K562 (cell line): ENCODE measurements at regions of chr1 and their contacts with region 1.

Region 1: DNA sequence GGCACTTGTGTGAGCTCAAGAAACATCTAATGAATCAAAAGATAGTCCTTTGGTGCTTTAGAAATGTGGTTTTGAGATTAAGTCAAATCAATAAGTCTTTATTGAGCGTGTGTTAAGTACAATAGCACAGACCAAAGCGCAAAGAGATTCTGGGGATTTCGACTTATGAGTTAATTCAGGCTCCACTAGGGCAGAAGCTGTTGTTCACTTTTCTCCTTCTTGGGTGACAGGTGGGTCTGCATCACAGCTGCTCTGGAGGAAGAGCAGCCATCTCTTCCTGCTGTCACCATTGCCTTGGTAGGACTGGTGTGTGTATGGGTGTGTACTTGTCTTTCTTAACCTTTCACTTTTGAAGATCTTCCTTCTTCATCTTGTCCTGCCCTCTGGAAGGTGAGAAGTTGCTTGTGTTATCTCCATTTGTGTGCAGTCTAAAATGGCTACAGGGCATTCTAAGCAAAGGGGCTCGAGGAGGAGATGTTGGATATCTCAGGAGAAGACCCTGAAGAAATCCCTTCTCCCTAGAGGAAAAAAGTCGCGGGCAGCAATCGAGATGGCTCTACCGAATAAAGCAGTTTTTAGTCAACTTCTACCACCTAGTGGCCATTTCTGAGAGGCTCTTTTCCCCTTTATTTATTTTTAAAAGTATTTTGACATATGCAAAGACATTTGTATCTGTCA is 22.9 kb upstream of the DISC1 start:
- DNase-seq: peak; percentile 47 to 80 (median 58)
- ATAC-seq: peak; percentile 90
- H3K4me3 ChIP-seq: peak overlapping the region; percentile 37
- H3K27ac ChIP-seq: 0 out of 3 replicates have a peak overlapping the region, but pooled peaks have one; percentile 22
- H3K4me1 ChIP-seq: peaks cover 0 to 5% of the 10 kb centered on the region in 2 experiments; a peak in 2 of 5 replicates
- H3K27me3 ChIP-seq: peaks cover 3 to 10% of the 10 kb centered on the region in 2 experiments; a peak in 3 of 5 replicates
- CTCF ChIP-seq: peak; percentile 72 to 94 (median 81)
- EP300 ChIP-seq: no peak
- POLR2A ChIP-seq: no peak
- RAD21 ChIP-seq: peak; percentile 89 to 91

Region 2: DNA sequence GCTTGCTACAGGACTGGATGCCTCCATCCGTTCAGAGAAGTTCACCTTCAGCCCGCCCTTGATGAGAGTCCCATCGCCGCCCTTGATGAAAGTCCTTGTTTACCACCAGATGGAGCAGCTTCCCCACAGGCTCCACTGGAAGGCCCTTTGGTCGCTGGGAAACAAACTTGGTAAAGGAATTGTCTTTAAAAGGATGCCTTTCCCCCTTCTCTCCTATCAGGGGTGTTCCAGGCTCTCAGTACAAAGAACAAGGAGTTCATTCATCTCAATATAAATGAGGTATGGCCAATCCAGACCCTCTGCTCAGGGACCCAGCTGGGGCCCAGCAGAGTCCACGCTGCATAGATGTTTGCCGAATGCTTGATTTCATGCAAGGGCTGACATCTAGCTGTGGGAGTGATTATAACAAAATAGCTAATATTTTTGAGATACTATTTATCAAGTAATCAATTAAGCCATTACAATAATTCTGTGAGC is 805.8 kb before region 1 on chr1:
- CTCF ChIA-PET with region 1: interaction called, 3 read pairs
- POLR2A ChIA-PET with region 1: no interaction called
- in situ Hi-C with region 1: loop called (anchors 10 kb)
- intact Hi-C with region 1: loop called (anchors 5 kb)
- DNase-seq: peak; percentile 48 to 74 (median 62)
- ATAC-seq: peak; percentile 95
- H3K4me3 ChIP-seq: no peak overlapping the region
- H3K27ac ChIP-seq: no peak overlapping the region
- H3K4me1 ChIP-seq: no peaks in the 10 kb centered on the region
- H3K27me3 ChIP-seq: peaks cover 22 to 68% of the 10 kb centered on the region in 2 experiments
- CTCF ChIP-seq: peak; percentile 79 to 84 (median 82)
- EP300 ChIP-seq: no peak
- POLR2A ChIP-seq: no peak
- RAD21 ChIP-seq: peak; percentile 90 to 98

Region 3: DNA sequence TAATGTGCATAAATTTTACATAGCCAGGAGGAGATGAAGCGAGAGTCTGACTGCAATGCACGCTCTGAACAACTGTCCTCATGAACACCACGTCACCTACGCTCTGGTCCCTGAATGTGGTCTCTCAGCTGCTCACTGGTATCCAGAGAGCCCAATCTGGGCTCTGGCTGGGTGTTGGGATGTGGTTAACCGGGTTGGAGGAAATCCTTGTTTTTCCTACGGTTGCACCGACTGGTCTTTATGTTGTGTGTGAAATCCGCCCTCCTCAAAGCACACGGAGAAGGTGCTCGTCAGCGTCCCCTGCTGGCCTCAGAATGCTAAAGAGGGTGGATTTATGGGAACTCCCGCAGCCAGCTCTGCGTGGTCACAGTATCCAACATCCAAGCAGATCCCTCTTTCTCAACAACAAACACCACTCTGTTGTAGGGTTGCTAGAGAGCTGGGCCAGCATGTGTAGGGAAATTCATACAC is 511.9 kb before region 1 on chr1:
- CTCF ChIA-PET with region 1: no interaction called
- POLR2A ChIA-PET with region 1: no interaction called
- in situ Hi-C with region 1: no loop called
- intact Hi-C with region 1: loop called (anchors 10 kb)
- DNase-seq: peak; percentile 67 to 89 (median 72)
- ATAC-seq: peak; percentile 97
- H3K4me3 ChIP-seq: no peak overlapping the region
- H3K27ac ChIP-seq: no peak overlapping the region
- H3K4me1 ChIP-seq: peaks cover 0 to 5% of the 10 kb centered on the region in 2 experiments; a peak in 4 of 5 replicates
- H3K27me3 ChIP-seq: peaks cover 11 to 18% of the 10 kb centered on the region in 2 experiments; a peak in 4 of 5 replicates
- CTCF ChIP-seq: peak; percentile 94 to 99 (median 97)
- EP300 ChIP-seq: no peak
- POLR2A ChIP-seq: no peak
- RAD21 ChIP-seq: peak; percentile 89 to 97

Region 4: DNA sequence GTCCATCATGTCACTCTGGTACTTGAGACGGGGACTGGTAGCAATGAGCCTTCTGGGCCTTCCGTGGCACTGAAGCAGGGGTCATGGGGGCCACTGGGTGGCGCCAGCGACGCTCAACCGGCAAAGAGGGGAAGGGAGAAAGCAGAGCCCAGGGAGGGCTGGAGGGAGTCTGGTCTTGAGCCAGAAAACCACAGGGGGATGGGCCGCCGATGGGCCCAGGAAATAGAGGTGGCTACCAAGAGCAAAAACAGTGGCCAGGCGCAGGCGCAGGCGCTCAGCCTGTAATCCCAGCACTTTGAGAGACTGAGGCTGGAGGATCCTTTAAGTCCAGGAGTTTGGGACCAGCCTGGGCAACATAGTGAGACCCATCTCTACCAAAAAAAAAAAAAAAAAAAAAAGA is 287.9 kb before region 1 on chr1:
- CTCF ChIA-PET with region 1: interaction called, 13 read pairs
- POLR2A ChIA-PET with region 1: interaction called, 3 read pairs
- in situ Hi-C with region 1: no loop called
- intact Hi-C with region 1: loop called (anchors 1 kb)
- DNase-seq: peak; percentile 54 to 81 (median 62)
- ATAC-seq: peak; percentile 97
- H3K4me3 ChIP-seq: no peak overlapping the region
- H3K27ac ChIP-seq: no peak overlapping the region
- H3K4me1 ChIP-seq: no peaks in the 10 kb centered on the region
- H3K27me3 ChIP-seq: peaks cover 4 to 7% of the 10 kb centered on the region in 2 experiments; a peak in 3 of 5 replicates
- CTCF ChIP-seq: peak; percentile 86 to 90 (median 89)
- EP300 ChIP-seq: no peak
- POLR2A ChIP-seq: no peak
- RAD21 ChIP-seq: peak; percentile 66 to 85

Region 5: GRCh38 chr1:231364192-231364591 is 239.5 kb before region 1 on chr1:
- CTCF ChIA-PET with region 1: no interaction called
- POLR2A ChIA-PET with region 1: interaction called, 4 read pairs
- in situ Hi-C with region 1: loop called (anchors 5 kb)
- intact Hi-C with region 1: no loop called
- DNase-seq: no peak
- ATAC-seq: no peak
- H3K4me3 ChIP-seq: no peak overlapping the region
- H3K27ac ChIP-seq: no peak overlapping the region
- H3K4me1 ChIP-seq: no peaks in the 10 kb centered on the region
- H3K27me3 ChIP-seq: no peaks in the 10 kb centered on the region
- CTCF ChIP-seq: no peak
- EP300 ChIP-seq: no peak
- POLR2A ChIP-seq: no peak
- RAD21 ChIP-seq: no peak

Region 6: DNA sequence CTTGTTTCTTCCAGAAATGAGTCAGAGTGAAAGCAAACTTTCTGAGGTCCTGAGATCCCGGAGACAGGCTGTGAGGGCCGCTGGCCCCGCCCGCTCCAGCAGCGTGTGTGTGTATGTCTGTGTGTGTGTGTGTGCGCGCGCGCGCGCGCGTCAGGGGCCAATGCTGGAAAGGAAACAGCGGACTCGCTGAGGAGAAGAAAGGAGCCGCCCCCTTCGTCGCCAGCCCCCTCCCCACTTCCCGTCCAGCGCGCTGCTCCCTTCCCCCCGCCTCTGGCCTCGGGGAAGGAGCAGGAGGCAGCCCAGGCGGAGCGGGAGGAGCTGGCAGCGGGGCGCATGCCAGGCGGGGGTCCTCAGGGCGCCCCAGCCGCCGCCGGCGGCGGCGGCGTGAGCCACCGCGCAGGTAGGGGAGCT is 22.8 kb after region 1 on chr1 and contains the start of gene DISC1:
- CTCF ChIA-PET with region 1: no interaction called
- POLR2A ChIA-PET with region 1: no interaction called
- in situ Hi-C with region 1: no loop called
- intact Hi-C with region 1: no loop called
- DNase-seq: peak; percentile 46 to 70 (median 53)
- ATAC-seq: peak; percentile 83
- H3K4me3 ChIP-seq: peak within 1 kb of the TSS; percentile 30
- H3K27ac ChIP-seq: no peak within 1 kb of the TSS
- H3K4me1 ChIP-seq: peaks cover 0 to 11% of the 10 kb centered on the region in 2 experiments; a peak in 3 of 5 replicates
- H3K27me3 ChIP-seq: peaks cover 21 to 37% of the 10 kb centered on the region in 2 experiments
- CTCF ChIP-seq: no peak
- EP300 ChIP-seq: no peak
- POLR2A ChIP-seq: no peak
- RAD21 ChIP-seq: no peak
- polyA plus RNA-seq, gene DISC1: 0.01 TPM in 1 of 2 experiments, not detected in the other